Heart left ventricle (tissue), 16 donors: ENCODE measurements at regions of chr14 and their contacts with region 1.

Region 1: DNA sequence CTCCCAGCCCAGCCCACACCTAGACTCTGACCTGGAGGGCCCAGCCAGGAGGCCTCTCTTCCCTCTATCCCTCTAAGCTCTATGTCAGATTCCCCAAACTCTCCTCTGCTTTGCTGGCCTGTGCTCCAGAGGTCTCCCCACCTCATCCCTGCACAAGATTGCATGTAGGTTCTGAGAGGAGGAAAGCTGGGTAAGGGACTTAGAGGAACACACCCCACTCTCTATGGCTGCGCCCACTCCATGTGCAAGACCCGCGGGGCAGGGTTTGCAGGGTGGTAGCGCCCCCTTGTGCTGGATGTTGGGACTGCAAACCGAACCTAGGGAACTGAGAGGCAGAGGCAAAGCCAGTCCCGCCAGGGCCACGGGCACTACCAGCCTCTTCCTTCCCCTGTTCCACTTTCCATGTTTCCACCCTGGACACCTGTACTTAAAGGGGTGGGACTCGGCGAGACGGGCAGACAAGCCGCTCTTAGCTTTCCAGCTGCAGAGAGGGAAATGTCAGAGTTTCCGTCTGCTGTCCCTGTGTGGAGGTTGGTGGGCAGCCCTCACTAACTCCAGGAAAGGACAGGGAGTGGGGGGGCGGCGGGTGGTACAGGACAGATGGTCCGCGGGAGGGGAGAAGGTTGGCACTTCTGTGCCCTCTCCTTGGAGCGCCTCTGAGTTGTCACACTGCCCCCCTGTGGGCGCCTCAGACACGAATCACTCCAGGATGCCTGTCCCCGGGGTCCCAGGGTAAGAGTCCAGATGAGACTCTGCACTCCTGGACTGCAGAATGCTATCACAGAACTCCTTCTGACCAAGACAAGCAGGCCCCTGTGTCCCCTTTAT is 16.8 kb downstream of the MMP14 start:
- DNase-seq: peak; percentile 84 to 95 (median 87)
- ATAC-seq: peak; percentile 51 to 70 (median 66)
- H3K4me3 ChIP-seq: peak overlapping the region in 11 of 12 donors; percentile 13 to 69 (median 54)
- H3K27ac ChIP-seq: peak overlapping the region in 7 of 12 donors; percentile 27 to 68 (median 40)
- H3K4me1 ChIP-seq: peaks cover 3 to 51% (median 44%) of the 10 kb centered on the region in 12 donors
- H3K27me3 ChIP-seq: no peaks in the 10 kb centered on the region
- CTCF ChIP-seq: peak; percentile 74 to 97 (median 90)
- POLR2A ChIP-seq: no peak

Region 2: DNA sequence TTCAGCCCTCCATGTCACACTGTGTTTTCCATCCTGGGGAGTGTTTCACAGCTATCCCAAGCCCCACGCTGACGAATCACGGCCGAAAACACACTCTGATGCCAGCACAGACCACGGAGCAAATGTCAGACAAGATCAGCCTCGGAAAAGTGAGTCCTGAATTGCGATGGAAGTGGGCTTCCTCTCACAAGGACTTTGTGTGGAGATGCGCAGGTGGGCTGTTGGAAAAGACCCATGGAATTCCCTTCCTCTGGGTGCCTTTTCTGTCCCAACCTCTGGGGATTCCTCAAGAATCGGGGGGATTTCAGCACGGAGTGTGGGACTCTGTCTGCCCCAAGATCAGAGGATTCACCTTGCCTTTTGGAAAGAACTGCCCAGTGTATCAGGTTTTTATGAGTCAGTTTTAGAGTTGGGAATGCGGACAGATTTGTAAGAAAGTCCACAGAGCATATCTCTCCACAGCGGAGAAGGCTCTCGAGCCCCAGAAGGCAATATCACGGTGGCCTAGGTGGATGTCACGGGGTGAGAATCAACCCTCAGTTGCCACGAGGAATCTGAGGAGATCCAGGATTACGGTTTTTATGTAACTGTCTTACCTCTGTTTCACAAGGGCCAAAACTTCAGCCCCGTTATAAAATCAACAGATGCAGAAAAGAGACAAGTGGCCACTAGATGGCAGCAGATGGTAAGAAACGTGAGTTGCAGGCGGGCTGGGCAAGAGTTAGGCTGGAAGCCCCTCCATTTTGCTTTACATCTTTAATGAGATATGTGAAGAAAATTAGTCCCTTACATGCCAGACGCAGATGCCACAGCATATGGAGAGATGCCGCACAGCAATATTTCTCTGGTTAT is 466.0 kb before region 1 on chr14:
- intact Hi-C with region 1: loop called in 7 of 10 experiments (anchors 5 to 10 kb)
- DNase-seq: peak in 4 of 5 donors; percentile 56 to 66 (median 60)
- ATAC-seq: peak in 3 of 4 donors; percentile 50 to 66 (median 60)
- H3K4me3 ChIP-seq: no peak overlapping the region
- H3K27ac ChIP-seq: no peak overlapping the region
- H3K4me1 ChIP-seq: peaks cover 0 to 8% (median 0%) of the 10 kb centered on the region in 12 donors
- H3K27me3 ChIP-seq: peaks cover 0 to 29% (median 0%) of the 10 kb centered on the region in 9 donors
- CTCF ChIP-seq: peak; percentile 67 to 90 (median 84)
- POLR2A ChIP-seq: no peak

Region 3: GRCh38 chr14:22653012-22653621 is 200.0 kb before region 1 on chr14:
- intact Hi-C with region 1: loop called in 3 of 10 experiments (anchors 1 to 10 kb)
- DNase-seq: peak in 4 of 5 donors; percentile 31 to 53 (median 48)
- ATAC-seq: peak in 3 of 4 donors; percentile 81 to 89 (median 86)
- H3K4me3 ChIP-seq: no peak overlapping the region
- H3K27ac ChIP-seq: no peak overlapping the region
- H3K4me1 ChIP-seq: peaks cover 0 to 2% (median 0%) of the 10 kb centered on the region in 12 donors
- H3K27me3 ChIP-seq: no peaks in the 10 kb centered on the region
- CTCF ChIP-seq: peak; percentile 65 to 80 (median 70)
- POLR2A ChIP-seq: no peak

Region 4: DNA sequence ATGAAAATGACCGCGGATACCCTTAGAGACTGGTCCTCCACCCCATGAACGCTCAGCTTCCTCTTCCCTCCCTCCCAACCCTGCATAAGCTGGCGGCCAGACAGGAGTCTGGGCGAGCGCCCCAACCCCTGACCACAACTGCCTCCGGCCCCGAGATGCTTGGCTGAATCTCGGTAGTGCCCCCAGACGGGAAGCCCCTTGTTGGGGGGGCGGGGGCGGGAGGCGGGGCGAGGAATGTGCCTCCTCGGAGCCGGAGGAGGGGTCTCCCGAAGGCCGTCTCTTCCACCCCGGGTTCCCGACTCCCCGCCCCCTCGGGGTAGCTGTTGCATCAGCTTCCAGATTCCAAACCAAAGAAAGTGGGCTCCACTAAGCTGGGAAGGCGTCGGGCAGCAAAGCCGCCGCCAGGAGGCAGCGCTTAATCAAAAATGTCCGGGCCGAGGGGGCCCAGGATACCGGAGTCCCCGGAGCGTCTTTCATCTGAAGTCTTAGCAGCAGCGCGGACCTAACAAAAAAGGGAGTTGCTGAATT is 30.5 kb before region 1 on chr14:
- intact Hi-C with region 1: loop called (anchors 1 to 2 kb)
- DNase-seq: peak; percentile 72 to 86 (median 79)
- ATAC-seq: peak; percentile 76 to 91 (median 85)
- H3K4me3 ChIP-seq: peak overlapping the region in 11 of 12 donors; percentile 14 to 59 (median 51)
- H3K27ac ChIP-seq: peak overlapping the region in 7 of 12 donors; percentile 11 to 70 (median 24)
- H3K4me1 ChIP-seq: peaks cover 0 to 54% (median 21%) of the 10 kb centered on the region in 12 donors
- H3K27me3 ChIP-seq: no peaks in the 10 kb centered on the region
- CTCF ChIP-seq: peak; percentile 71 to 98 (median 92)
- POLR2A ChIP-seq: no peak

Region 5: GRCh38 chr14:22836301-22837113 is 16.6 kb before region 1 on chr14 and contains the start of gene MMP14:
- intact Hi-C with region 1: loop called in 3 of 10 experiments (anchors 1 to 2 kb)
- DNase-seq: peak; percentile 69 to 87 (median 82)
- ATAC-seq: peak; percentile 73 to 86 (median 80)
- H3K4me3 ChIP-seq: peak within 1 kb of the TSS; percentile 56 to 99 (median 82)
- H3K27ac ChIP-seq: peak within 1 kb of the TSS; percentile 81 to 98 (median 92)
- H3K4me1 ChIP-seq: peaks cover 0 to 37% (median 18%) of the 10 kb centered on the region in 12 donors
- H3K27me3 ChIP-seq: no peaks in the 10 kb centered on the region
- CTCF ChIP-seq: peak in 9 of 12 donors; percentile 27 to 57 (median 51)
- POLR2A ChIP-seq: peak in 1 of 2 donors; percentile 45
- total RNA-seq, gene MMP14: 14.0 to 90.6 (median 24.8) TPM